ENCODE measurements at regions of chr12 and their contacts with region 1.

Region 1: DNA sequence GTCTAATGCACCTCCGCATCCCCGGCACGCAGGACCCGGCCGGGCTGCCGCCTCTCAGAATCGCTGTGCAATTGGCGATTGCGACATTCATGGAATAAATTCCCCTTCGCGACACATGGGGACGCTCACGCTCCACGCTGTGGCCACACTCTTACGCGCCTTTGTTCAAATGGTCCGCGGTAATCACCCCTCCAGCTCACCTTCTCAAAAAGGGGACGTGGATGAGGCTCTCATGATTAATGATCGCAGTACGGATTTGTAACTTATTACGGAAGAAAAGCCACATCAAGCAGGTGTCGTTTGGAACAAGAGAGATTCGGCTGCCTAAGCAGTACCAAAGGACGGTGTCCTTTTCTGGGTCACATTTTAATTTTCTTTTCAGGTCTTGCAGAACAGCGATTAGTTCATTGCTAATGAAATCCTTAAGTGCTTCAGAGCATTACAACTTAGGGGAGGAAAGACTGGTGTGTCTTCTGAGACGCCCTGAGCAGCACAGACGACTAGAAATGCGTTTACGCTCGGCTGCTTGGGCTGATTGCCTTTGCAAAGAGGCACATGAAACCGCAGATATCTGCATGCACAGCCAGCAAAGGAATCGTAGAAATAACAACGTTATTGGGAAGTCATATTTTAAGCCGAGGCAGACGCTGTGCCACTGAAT is 37.3 kb upstream of the ADGRD1 start:
- DNase-seq: peak; percentile 75
- ATAC-seq: peak; percentile 88

Region 2: GRCh38 chr12:130276218-130276617 is 640.2 kb before region 1 on chr12:
- intact Hi-C with region 1: no loop called
- DNase-seq: no peak
- ATAC-seq: no peak

Region 3: GRCh38 chr12:130686511-130686991 is 229.8 kb before region 1 on chr12:
- intact Hi-C with region 1: no loop called
- DNase-seq: no peak
- ATAC-seq: no peak

Region 4: DNA sequence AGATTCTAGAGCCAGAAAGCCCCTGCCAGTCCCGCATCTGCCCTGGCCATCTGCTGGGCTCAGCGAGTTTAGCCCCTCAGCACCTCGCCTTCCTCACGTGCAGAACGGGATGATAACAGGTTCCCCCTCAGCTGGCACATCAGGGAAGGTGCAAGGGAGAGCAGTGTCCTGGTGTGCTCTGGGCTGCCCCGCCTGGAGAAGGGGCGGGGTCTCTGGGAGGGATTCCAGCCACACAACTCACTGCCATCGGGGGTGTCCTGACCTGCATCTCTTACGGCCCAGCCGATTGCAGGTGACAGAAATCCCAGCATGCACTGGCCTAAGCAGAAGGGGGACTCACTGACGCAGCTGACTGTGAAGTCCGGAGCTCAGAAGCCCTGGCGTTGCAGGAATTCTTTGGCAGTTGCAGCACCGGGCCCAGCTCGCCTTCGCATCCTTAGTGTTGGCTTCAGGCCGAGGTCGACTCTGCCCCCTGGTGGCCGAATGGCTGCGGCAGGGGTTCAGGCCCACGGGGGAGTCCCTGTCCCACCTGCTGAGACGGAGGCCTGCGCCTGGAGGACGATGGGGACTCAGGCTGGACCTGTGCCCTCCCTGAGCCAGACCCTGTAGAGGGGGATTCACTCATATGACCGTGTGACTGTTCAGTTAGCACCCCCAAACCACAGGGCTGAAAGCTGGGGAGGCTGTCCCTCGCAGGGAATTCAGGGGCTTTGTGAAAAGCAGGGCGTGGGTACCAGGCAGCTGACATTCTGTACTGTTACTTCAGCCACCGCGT is 215.9 kb after region 1 on chr12:
- intact Hi-C with region 1: loop called (anchors 5 kb)
- DNase-seq: peak; percentile 82
- ATAC-seq: peak; percentile 72

Region 5: GRCh38 chr12:131287938-131288764 is 371.8 kb after region 1 on chr12:
- intact Hi-C with region 1: no loop called
- DNase-seq: no peak
- ATAC-seq: no peak

Measured in Right ventricle myocardium superior (tissue), 1 donor.